ENCODE measurements at regions of chr4 and their contacts with region 1.

Region 1: DNA sequence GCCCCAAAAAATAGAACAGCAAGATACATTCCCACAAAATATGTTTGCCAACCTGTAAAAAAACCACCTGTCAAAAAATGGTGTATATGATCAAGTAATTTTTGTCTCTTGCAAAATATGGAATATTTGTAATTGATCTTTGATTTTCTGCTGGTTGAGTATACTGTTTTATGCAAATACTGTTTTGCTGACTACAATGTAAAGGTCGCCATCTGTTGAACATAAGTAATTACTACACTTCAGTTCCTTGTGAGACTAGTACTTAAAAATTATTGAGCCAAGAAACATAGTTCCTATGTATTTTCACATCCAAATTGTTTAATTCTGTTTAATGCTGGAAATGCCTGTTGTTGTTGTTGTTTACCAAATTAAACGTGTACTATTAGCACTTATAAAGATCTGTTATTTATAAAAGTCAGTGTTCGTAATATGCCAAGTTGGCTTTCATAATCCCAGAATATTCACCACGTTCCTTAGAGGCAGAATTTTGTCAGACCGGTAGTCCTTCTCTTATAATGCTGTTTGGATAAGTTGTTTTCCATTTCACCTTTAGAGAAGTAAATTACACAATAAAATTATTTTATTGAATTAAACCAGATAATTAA is 144.2 kb downstream of the PDLIM5 start:
- DNase-seq: peak; percentile 14 to 59 (median 23)
- ATAC-seq: peak; percentile 79
- H3K4me3 ChIP-seq: no peak overlapping the region
- H3K27ac ChIP-seq: no peak overlapping the region
- H3K4me1 ChIP-seq: no peaks in the 10 kb centered on the region; a peak in 1 of 5 replicates
- H3K27me3 ChIP-seq: no peaks in the 10 kb centered on the region
- CTCF ChIP-seq: peak; percentile 30 to 77 (median 49); a peak in 3 of 6 replicates
- EP300 ChIP-seq: no peak
- POLR2A ChIP-seq: no peak
- RAD21 ChIP-seq: peak; percentile 90 to 92

Region 2: GRCh38 chr4:94304365-94304971 is 291.5 kb before region 1 on chr4:
- CTCF ChIA-PET with region 1: interaction called, 10 read pairs
- POLR2A ChIA-PET with region 1: no interaction called
- in situ Hi-C with region 1: loop called (anchors 10 kb)
- intact Hi-C with region 1: loop called (anchors 2 kb)
- DNase-seq: peak in 3 of 4 experiments; percentile 15 to 59 (median 27)
- ATAC-seq: peak; percentile 85
- H3K4me3 ChIP-seq: no peak overlapping the region
- H3K27ac ChIP-seq: no peak overlapping the region
- H3K4me1 ChIP-seq: peaks cover 0 to 13% of the 10 kb centered on the region in 2 experiments; a peak in 2 of 5 replicates
- H3K27me3 ChIP-seq: no peaks in the 10 kb centered on the region
- CTCF ChIP-seq: peak; percentile 53 to 80 (median 58); a peak in 5 of 6 replicates
- EP300 ChIP-seq: no peak
- POLR2A ChIP-seq: no peak
- RAD21 ChIP-seq: peak; percentile 65 to 79

Region 3: DNA sequence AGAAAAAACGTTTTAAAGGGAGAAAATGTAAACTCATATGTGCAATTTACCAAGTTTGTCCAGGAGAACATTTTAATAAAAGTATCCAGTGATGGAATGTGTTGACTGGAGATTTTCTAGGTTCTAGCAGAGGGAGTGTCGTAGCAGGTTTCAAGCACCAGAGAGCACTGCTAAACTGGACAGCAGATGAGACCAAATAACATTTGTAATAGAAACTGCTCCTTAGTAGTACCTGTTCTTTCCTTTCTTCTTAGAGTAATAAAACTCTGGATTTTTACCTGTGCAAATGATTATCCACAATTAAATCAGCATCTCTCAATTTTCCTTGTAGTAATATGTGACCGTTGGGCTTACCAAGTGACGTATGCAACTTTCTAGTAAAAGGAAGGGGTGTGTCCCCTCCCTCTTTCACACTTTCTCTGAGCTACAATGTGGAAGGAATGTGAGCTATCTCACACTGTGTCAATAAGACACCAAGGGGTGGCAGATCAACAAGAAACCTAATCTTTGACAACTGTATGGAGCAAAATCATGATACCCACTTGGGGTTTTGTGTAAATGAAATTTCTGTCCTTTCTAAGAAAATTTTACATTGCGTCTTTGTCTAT is 262.9 kb before region 1 on chr4:
- CTCF ChIA-PET with region 1: interaction called, 5 read pairs
- POLR2A ChIA-PET with region 1: no interaction called
- in situ Hi-C with region 1: no loop called
- intact Hi-C with region 1: loop called (anchors 1 kb)
- DNase-seq: peak in 2 of 4 experiments; percentile 24 to 46
- ATAC-seq: peak; percentile 85
- H3K4me3 ChIP-seq: no peak overlapping the region
- H3K27ac ChIP-seq: no peak overlapping the region
- H3K4me1 ChIP-seq: peaks cover 0 to 3% of the 10 kb centered on the region in 2 experiments; a peak in 2 of 5 replicates
- H3K27me3 ChIP-seq: no peaks in the 10 kb centered on the region; a peak in 1 of 5 replicates
- CTCF ChIP-seq: peak; percentile 57 to 64 (median 61)
- EP300 ChIP-seq: no peak
- POLR2A ChIP-seq: no peak
- RAD21 ChIP-seq: peak; percentile 70 to 80

Region 4: DNA sequence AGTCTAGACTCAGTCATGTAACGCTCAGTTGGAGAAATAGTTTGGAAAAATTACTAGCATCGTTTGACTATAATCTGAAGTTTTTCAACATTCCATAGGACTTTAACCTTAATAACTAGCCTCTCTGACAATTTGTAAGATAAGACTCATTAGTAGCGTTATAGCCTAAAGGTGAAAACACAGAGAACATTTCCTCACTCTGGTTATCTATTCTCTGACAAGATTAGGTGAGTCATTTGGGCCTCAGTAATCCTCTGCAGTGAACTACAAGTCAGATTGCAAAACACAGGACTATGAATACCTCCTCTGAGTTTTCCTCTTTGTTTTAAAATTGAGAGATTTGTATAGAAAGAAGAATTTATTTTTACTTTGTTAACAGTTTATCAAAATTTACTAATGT is 176.0 kb before region 1 on chr4:
- CTCF ChIA-PET with region 1: no interaction called
- POLR2A ChIA-PET with region 1: no interaction called
- in situ Hi-C with region 1: no loop called
- intact Hi-C with region 1: no loop called
- DNase-seq: peak in 2 of 4 experiments; percentile 22 to 41
- ATAC-seq: peak; percentile 76
- H3K4me3 ChIP-seq: no peak overlapping the region
- H3K27ac ChIP-seq: no peak overlapping the region
- H3K4me1 ChIP-seq: no peaks in the 10 kb centered on the region
- H3K27me3 ChIP-seq: no peaks in the 10 kb centered on the region
- CTCF ChIP-seq: no peak
- EP300 ChIP-seq: peak; percentile 10; the same call in 1 of the 2 replicates
- POLR2A ChIP-seq: no peak
- RAD21 ChIP-seq: no peak

Region 5: DNA sequence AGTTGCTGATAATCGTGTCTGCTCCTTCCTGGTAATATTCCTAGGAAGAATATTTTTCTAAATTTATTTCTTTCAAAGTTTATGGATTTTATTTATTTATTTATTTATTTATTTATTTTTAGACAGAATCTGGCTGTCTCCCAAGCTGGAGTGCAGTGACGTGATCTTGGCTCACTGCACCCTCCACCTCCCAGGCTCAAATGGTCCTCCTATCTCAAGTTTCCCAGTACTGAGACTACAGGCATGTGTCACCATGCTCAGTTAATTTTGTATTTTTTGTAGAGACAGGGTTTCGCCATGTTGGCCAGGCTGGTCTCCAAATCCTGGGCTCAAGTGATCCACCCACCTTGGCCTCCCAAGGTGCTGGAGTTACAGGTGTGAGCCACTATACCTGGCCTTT is 95.3 kb before region 1 on chr4:
- CTCF ChIA-PET with region 1: no interaction called
- POLR2A ChIA-PET with region 1: no interaction called
- in situ Hi-C with region 1: no loop called
- intact Hi-C with region 1: no loop called
- DNase-seq: no peak
- ATAC-seq: peak; percentile 63; the same call in 2 of the 3 replicates
- H3K4me3 ChIP-seq: no peak overlapping the region
- H3K27ac ChIP-seq: no peak overlapping the region
- H3K4me1 ChIP-seq: no peaks in the 10 kb centered on the region
- H3K27me3 ChIP-seq: no peaks in the 10 kb centered on the region
- CTCF ChIP-seq: no peak
- EP300 ChIP-seq: no peak
- POLR2A ChIP-seq: no peak
- RAD21 ChIP-seq: no peak